ENCODE measurements at regions of chr6 and their contacts with region 1.

Region 1: DNA sequence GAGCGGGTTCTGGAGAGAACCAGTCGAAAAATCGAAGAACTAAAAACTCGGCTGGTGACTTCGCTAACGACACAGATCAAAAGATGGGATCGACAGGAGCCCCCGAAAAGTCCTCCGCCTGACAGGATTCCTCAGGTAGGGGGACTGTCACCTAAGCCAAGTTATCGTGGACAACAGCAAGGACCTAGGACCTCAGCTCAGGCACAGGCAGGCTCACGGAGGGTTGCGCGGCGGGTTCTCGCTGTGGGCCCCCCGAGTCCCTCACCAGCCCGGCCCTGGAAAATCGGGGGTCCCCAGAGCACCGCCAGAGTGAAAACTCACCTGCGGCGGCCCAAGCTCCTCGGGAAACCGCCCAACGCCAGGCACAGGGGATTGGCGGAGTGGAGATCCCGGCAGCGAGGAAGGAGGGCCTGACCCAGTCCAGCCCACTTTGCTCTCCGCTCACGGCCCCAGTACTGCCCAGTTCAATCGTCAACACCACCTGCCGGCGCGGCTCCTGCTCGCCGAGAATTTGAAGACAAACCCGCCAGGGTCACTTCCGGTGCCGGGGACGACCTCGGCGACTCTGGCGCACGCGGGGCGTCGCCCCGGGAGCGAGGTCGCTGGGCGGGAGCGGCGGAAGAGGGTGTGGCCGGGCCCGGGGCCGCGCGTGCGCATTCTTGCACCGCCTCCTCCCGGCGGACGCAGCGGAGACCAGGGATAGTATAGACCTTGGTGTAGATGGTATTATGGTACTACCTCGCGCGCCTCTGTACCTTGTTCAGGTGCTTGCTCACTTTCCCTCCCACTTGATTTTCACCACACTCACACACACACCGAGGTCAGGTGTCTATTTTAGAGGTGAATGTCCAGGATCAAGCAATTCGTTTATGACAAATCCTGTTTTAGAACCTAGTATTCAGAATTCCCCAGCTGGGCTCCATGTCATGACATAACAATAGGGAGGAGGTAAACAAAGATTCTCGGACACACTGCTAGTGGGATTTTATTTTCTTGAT is at the start of gene KATNA1:
- DNase-seq: peak; percentile 85
- ATAC-seq: peak; percentile 87
- H3K4me3 ChIP-seq: peak within 1 kb of the TSS; percentile 87
- H3K27ac ChIP-seq: peak within 1 kb of the TSS; percentile 39
- H3K4me1 ChIP-seq: peaks cover 11% of the 10 kb centered on the region
- H3K27me3 ChIP-seq: no peaks in the 10 kb centered on the region
- CTCF ChIP-seq: no peak
- total RNA-seq, gene KATNA1: 11.4 and 18.1 TPM in 2 replicates

Region 2: DNA sequence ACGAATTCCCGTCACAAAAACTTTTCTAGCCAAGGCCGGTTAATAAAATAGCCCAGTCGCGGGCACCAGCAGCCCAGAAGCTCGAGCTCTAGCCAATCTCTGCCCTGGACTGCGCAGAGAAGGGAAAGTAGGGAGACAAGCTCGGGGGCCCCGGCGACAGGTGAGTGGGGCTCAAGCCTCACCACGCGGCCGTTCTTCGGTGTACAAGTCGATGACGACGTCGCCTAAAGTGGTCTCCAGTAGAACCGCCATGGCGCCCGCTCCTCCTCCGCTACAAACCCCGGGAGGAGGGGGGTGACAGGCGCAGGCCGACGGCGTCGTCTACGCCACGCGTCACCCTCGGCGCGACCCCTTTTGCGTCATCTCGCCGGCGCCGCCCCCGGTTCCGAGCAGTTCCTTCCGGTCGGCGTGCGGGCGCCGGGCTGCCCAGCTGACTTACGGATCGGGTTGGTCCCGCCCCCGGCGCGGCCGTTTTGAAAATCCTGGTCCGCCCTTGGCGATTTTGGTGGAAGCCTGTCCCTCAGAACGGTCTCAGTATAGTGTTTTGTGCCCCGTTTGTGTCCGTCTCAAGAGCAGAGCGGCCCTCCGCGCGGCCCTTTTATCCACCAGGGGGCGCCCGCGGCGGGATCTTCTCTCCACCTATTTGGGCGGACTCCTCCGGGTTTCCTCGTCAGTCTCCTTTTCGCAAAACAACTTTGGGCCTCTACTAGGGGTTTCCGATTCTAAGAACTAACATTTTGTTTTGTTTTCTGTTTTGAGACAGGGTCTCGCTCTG is 102.5 kb before region 1 on chr6 and contains the start of gene PPIL4:
- CTCF ChIA-PET with region 1: no interaction called
- POLR2A ChIA-PET with region 1: no interaction called
- intact Hi-C with region 1: loop called (anchors 5 kb)
- DNase-seq: peak; percentile 90
- ATAC-seq: peak; percentile 88
- H3K4me3 ChIP-seq: peak within 1 kb of the TSS; percentile 95
- H3K27ac ChIP-seq: peak within 1 kb of the TSS; percentile 90
- H3K4me1 ChIP-seq: peaks cover 12% of the 10 kb centered on the region
- H3K27me3 ChIP-seq: no peaks in the 10 kb centered on the region
- CTCF ChIP-seq: peak; percentile 90
- total RNA-seq, gene PPIL4: 11.1 and 12.8 TPM in 2 replicates

Region 3: GRCh38 chr6:149565527-149566409 is 82.7 kb before region 1 on chr6 and contains the start of gene GINM1:
- CTCF ChIA-PET with region 1: no interaction called
- POLR2A ChIA-PET with region 1: no interaction called
- intact Hi-C with region 1: loop called (anchors 2 kb)
- DNase-seq: peak; percentile 95
- ATAC-seq: peak; percentile 84
- H3K4me3 ChIP-seq: peak within 1 kb of the TSS; percentile 94
- H3K27ac ChIP-seq: peak within 1 kb of the TSS; percentile 37; the same call in 1 of the 2 replicates
- H3K4me1 ChIP-seq: peaks cover 26% of the 10 kb centered on the region
- H3K27me3 ChIP-seq: no peaks in the 10 kb centered on the region
- CTCF ChIP-seq: peak; percentile 71
- total RNA-seq, gene GINM1: 15.0 and 19.2 TPM in 2 replicates

Region 4: DNA sequence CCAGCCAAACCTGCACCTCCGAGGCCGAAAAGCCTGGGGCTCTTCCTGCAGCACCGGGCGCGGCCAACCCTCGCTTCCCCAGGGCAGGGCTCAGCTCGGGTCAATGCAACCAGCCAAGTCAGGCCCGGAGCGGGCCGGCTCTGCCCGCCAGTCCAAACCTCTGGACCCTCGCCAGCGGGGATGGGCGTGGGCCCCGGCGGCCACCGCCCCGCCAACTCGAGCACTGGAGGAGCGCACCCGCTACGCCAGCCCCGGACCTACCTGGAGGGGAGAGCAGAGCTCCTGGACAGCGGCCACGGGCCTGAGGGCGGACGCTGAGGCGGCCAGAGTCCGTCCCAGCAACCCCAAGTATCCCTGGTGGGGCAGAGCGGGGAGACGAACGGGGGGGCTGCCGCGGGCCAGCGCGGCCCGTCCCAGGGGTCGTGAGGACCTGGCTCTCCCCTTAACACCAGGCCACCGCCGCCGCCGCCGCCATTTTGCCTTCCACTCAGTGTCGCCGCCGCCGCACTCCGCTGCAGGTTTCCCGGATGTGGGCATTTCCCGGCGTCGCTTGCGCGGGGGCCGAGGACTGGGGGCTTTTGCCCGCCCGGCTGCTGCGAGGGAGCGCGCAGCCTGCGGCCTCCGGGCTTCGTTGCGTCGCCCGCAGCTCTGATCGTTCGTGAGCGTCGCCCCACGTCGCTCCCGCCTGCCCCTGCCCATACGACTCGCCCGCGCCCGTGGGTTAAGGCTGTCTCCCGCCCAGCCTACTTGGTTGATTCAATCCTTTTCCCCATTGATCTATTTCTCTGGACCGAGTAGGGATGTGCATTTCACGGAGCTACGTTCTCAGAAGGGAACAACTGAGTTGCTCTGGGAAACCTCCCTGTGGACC is 69.4 kb after region 1 on chr6 and contains the start of gene LATS1:
- CTCF ChIA-PET with region 1: no interaction called
- POLR2A ChIA-PET with region 1: no interaction called
- intact Hi-C with region 1: loop called (anchors 5 kb)
- DNase-seq: peak; percentile 75
- ATAC-seq: peak; percentile 80
- H3K4me3 ChIP-seq: peak within 1 kb of the TSS; percentile 87
- H3K27ac ChIP-seq: peak within 1 kb of the TSS; percentile 94
- H3K4me1 ChIP-seq: peaks cover 8% of the 10 kb centered on the region
- H3K27me3 ChIP-seq: no peaks in the 10 kb centered on the region
- CTCF ChIP-seq: no peak
- total RNA-seq, gene LATS1: 9.2 and 9.7 TPM in 2 replicates

Measured in PC-3 (cell line).